ENCODE measurements at regions of chr3 and their contacts with region 1.

Region 1: DNA sequence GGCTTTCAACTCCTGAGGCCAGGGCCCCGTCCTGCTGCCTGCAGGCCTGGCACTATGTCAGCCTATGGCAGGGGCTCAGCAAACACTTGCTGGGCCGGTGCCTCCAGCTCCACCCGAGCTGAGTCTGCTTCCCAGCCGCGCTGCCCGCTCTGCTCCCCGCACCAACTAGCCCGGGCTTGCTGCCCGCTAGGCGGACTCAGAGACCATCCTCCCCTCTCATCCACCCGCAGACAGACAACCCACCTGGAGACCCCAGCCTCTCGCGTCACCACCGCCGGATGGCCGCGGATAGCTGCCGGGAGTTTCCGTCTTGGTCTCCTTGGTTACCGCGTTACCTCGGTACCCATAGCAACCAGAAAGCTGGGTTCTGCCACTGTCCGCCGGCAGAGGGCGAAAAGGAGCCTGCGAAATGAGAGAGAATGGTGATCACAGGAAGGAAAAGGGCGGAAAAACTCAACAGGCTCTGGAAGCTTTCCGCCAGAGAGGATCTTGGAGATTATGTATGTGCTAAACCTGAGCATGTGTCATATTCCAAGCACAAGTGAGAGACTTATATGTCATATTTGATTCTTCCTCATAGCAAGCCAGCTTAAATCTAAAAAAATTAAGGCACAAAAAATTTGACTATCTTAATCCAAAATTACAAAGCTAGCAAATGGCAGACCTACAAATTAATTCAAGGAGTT is at the start of gene ZBBX:
- DNase-seq: peak; percentile 97
- H3K4me3 Mint-ChIP-seq: peak within 1 kb of the TSS; percentile 80
- H3K27ac Mint-ChIP-seq: peak within 1 kb of the TSS; percentile 62
- H3K4me1 Mint-ChIP-seq: no peaks in the 10 kb centered on the region
- H3K27me3 Mint-ChIP-seq: no peaks in the 10 kb centered on the region
- CTCF ChIP-seq: peak; percentile 98
- total RNA-seq, gene ZBBX: 0.49 and 0.57 TPM in 2 replicates

Region 2: GRCh38 chr3:167575000-167575600 is 195.0 kb after region 1 on chr3:
- CTCF ChIA-PET with region 1: no interaction called
- intact Hi-C with region 1: no loop called
- DNase-seq: no peak
- H3K4me3 Mint-ChIP-seq: no peak overlapping the region
- H3K27ac Mint-ChIP-seq: no peak overlapping the region
- H3K4me1 Mint-ChIP-seq: peaks cover 8% of the 10 kb centered on the region
- H3K27me3 Mint-ChIP-seq: peaks cover 10% of the 10 kb centered on the region
- CTCF ChIP-seq: no peak

Region 3: DNA sequence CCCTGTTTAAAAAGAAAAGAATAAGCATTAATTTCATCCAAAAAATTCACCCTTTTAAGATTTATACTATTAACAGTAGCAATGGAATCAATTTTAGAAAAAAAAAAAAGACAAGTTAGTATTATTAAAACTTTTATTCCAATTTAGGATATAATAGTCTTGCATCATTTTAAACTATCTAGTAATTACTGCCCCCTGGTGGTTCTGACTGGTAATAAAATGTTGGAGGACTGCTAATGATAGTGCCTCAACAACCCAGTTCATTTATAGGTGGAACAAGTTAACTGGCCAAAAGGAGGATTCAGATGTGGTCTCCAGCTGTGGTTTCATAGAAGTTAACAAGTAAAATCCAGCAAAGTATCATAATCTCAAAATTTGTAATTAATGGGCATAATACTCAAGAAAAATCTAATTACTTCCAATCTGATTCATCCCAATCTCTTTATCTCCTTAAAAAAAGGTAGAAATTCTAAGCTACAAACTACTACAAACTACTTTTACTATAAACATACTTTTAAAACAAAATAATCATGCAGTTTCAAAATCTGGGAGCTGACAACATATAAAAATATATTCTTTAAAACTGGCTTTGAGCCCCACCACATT is 304.3 kb after region 1 on chr3:
- CTCF ChIA-PET with region 1: interaction called, 9 read pairs
- intact Hi-C with region 1: loop called (anchors 1 kb)
- DNase-seq: peak; percentile 84
- H3K4me3 Mint-ChIP-seq: no peak overlapping the region
- H3K27ac Mint-ChIP-seq: no peak overlapping the region
- H3K4me1 Mint-ChIP-seq: peaks cover 6% of the 10 kb centered on the region
- H3K27me3 Mint-ChIP-seq: no peaks in the 10 kb centered on the region
- CTCF ChIP-seq: peak; percentile 90

Region 4: DNA sequence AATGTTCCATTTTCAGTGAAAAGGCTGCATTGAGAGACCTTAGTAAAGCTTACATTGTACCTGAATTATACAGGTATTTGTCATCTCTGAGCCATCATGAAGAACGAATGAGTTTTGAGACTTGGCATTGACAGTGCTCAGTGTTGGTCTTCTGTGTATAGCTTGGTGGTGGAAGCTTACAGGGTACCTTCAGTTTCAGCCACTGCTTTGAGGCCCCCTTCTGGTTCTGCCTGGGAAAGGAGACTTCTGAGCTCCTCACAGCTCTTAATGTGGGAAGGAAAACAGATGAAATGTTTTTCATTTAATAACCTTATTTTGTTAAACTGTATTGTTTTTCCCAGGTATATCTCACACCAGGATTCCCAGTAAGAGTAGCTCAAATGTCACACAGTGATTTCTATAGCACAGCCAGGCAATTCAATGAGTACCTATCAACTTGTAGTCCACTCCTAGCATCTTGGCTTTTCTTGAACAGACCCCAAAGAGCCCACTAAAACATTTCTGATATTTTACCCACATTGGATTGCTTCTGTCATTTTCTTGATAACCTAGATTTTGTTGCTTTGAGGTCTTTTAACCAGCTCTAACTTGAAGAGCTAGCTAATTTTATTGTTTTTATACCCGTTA is 360.9 kb after region 1 on chr3:
- CTCF ChIA-PET with region 1: interaction called, 13 read pairs
- intact Hi-C with region 1: loop called (anchors 2 kb)
- DNase-seq: peak; percentile 64
- H3K4me3 Mint-ChIP-seq: no peak overlapping the region
- H3K27ac Mint-ChIP-seq: no peak overlapping the region
- H3K4me1 Mint-ChIP-seq: peaks cover 11% of the 10 kb centered on the region
- H3K27me3 Mint-ChIP-seq: no peaks in the 10 kb centered on the region
- CTCF ChIP-seq: peak; percentile 59